Ovary (tissue), 10 donors: ENCODE measurements at regions of chr1 and their contacts with region 1.

Region 1: DNA sequence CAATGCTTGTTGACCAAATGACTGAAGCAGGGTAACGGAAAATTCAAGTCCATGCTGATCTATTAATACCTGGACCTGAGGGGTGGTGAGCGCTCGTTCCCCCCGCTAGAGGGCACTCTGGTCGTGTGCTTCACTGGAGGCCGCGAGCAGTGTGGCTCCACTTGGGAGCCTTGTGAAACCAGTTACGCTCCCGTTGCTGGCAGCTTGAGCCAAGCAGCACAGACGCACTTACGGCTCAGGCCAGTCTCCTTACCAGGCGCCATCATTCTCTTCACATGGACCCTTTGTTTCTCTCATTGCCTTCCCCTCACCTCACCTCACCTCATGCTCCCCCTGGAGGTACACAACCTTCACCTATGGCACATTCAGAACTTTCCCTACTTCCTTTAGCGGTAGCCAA is 49.7 kb upstream of the TSPAN2 start:
- DNase-seq: peak; percentile 86 to 92 (median 90)
- H3K4me3 ChIP-seq: no peak overlapping the region
- H3K27ac ChIP-seq: no peak overlapping the region
- H3K4me1 ChIP-seq: peaks cover 3% of the 10 kb centered on the region
- H3K27me3 ChIP-seq: no peaks in the 10 kb centered on the region
- CTCF ChIP-seq: peak; percentile 87 to 93 (median 90)
- EP300 ChIP-seq: no peak
- POLR2A ChIP-seq: no peak

Region 2: GRCh38 chr1:115266729-115267421 is 127.9 kb after region 1 on chr1:
- intact Hi-C with region 1: loop called in 1 of 4 experiments (anchors 10 kb)
- DNase-seq: peak in 1 of 5 donors; percentile 47
- H3K4me3 ChIP-seq: no peak overlapping the region
- H3K27ac ChIP-seq: no peak overlapping the region
- H3K4me1 ChIP-seq: peaks cover 4% of the 10 kb centered on the region
- H3K27me3 ChIP-seq: no peaks in the 10 kb centered on the region
- CTCF ChIP-seq: no peak
- EP300 ChIP-seq: no peak
- POLR2A ChIP-seq: no peak

Region 3: GRCh38 chr1:115337633-115338456 is 198.9 kb after region 1 on chr1 and contains the start of gene NGF:
- intact Hi-C with region 1: loop called in 2 of 4 experiments (anchors 5 to 10 kb)
- DNase-seq: peak; percentile 77 to 85 (median 80)
- H3K4me3 ChIP-seq: peak within 1 kb of the TSS; percentile 84
- H3K27ac ChIP-seq: peak within 1 kb of the TSS; percentile 16 to 82
- H3K4me1 ChIP-seq: peaks cover 23% of the 10 kb centered on the region
- H3K27me3 ChIP-seq: no peaks in the 10 kb centered on the region
- CTCF ChIP-seq: peak in 1 of 3 donors; percentile 16
- EP300 ChIP-seq: no peak
- POLR2A ChIP-seq: peak; percentile 78
- total RNA-seq, gene NGF: 3.0 to 43.4 (median 14.1) TPM

Region 4: GRCh38 chr1:115469703-115470476 is 330.9 kb after region 1 on chr1:
- intact Hi-C with region 1: loop called (anchors 2 to 5 kb)
- DNase-seq: peak; percentile 32 to 68 (median 63)
- H3K4me3 ChIP-seq: no peak overlapping the region
- H3K27ac ChIP-seq: no peak overlapping the region
- H3K4me1 ChIP-seq: peaks cover 1% of the 10 kb centered on the region
- H3K27me3 ChIP-seq: no peaks in the 10 kb centered on the region
- CTCF ChIP-seq: peak; percentile 72 to 87 (median 77)
- EP300 ChIP-seq: no peak
- POLR2A ChIP-seq: no peak

Region 5: GRCh38 chr1:115506926-115507589 is 368.1 kb after region 1 on chr1:
- intact Hi-C with region 1: loop called in 1 of 4 experiments (anchors 10 kb)
- DNase-seq: peak in 3 of 5 donors; percentile 19 to 38 (median 30)
- H3K4me3 ChIP-seq: no peak overlapping the region
- H3K27ac ChIP-seq: no peak overlapping the region
- H3K4me1 ChIP-seq: no peaks in the 10 kb centered on the region
- H3K27me3 ChIP-seq: no peaks in the 10 kb centered on the region
- CTCF ChIP-seq: peak in 1 of 3 donors; percentile 16
- EP300 ChIP-seq: no peak
- POLR2A ChIP-seq: no peak

Region 6: GRCh38 chr1:115595279-115596079 is 456.5 kb after region 1 on chr1:
- intact Hi-C with region 1: loop called (anchors 5 to 10 kb)
- DNase-seq: peak; percentile 78 to 90 (median 89)
- H3K4me3 ChIP-seq: no peak overlapping the region
- H3K27ac ChIP-seq: no peak overlapping the region
- H3K4me1 ChIP-seq: no peaks in the 10 kb centered on the region
- H3K27me3 ChIP-seq: no peaks in the 10 kb centered on the region
- CTCF ChIP-seq: peak; percentile 76 to 80 (median 79)
- EP300 ChIP-seq: no peak
- POLR2A ChIP-seq: no peak